ENCODE measurements at regions of chr1 and their contacts with region 1.

Region 1: DNA sequence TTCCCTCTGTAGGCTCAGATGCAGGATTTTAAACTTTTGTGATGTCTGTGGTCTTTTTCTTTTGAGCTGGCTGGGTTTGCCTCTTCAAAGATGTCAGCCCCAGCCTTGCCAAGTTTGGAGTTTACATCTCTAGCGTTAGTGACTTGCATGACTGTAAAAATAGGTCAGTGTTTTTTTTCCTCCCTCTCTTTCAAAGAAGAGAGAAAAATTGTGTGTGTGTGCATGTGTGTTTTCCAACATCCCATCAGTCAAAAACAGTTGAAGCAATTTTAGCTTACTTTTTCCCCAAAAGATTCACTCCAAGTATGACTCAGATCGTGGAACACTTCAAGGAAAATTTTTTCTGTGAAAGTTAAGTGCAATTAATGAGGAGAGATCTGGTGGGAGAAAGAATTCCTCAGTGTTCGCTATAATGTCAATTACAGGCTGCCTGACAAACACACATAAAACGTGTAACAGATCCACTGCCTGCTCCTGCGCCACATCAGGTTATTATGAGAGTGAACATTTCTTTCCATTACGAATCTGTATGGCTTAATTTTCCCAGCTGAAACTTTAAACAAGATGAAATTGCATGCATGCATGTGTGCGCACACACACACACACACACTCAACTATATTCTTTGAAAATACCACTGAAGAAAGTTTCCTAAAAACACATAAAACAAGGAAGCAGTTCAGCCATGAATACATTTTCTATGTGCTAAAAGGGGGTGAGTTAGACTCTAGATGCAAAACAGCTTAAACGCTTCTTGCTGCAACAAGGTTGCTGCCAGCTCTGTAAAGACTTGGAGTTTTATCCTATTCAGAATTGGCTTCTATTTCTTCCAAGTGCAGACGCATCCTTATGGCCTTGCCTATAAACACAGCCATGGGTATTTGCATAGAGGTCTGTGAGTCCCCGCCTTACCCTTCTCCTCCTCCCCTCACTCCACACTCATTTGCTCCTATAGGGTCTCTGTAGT is 55.5 kb downstream of the TLR5 start:
- DNase-seq: no peak
- ATAC-seq: no peak
- H3K4me3 ChIP-seq: no peak overlapping the region
- H3K27ac ChIP-seq: no peak overlapping the region
- H3K4me1 ChIP-seq: no peaks in the 10 kb centered on the region
- H3K27me3 ChIP-seq: 0 out of 2 replicates have a peak, but pooled peaks cover 8% of the 10 kb centered on the region
- CTCF ChIP-seq: no peak

Region 2: GRCh38 chr1:222732216-222733159 is 355.1 kb before region 1 on chr1:
- CTCF ChIA-PET with region 1: interaction called, 13 read pairs
- POLR2A ChIA-PET with region 1: no interaction called
- intact Hi-C with region 1: no loop called
- DNase-seq: no peak
- ATAC-seq: no peak
- H3K4me3 ChIP-seq: no peak overlapping the region
- H3K27ac ChIP-seq: no peak overlapping the region
- H3K4me1 ChIP-seq: peaks cover 15% of the 10 kb centered on the region
- H3K27me3 ChIP-seq: no peaks in the 10 kb centered on the region
- CTCF ChIP-seq: no peak

Region 3: DNA sequence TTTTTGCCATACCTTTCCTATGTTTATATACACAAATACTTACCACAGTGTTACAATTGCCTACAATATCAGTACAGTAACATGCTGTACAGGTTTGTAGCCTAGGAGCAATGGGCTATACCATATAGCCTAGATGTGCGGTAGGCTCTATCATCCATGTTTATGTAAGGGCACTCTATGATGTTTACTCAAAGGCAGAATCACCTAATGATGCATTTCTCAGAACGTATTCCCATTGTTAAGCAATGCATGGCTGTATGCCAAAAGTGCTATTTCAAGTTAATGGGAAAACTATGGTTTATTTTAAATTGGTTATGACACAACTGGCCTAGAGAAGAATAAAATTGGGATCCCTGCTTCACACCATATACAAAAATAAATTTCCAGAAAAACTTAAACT is 309.6 kb before region 1 on chr1:
- CTCF ChIA-PET with region 1: no interaction called
- POLR2A ChIA-PET with region 1: interaction called, 19 read pairs
- intact Hi-C with region 1: no loop called
- DNase-seq: peak; percentile 94
- ATAC-seq: peak; percentile 72
- H3K4me3 ChIP-seq: no peak overlapping the region
- H3K27ac ChIP-seq: peak overlapping the region; percentile 63
- H3K4me1 ChIP-seq: peaks cover 13% of the 10 kb centered on the region
- H3K27me3 ChIP-seq: no peaks in the 10 kb centered on the region
- CTCF ChIP-seq: no peak

Region 4: GRCh38 chr1:222798116-222798515 is 289.5 kb before region 1 on chr1:
- CTCF ChIA-PET with region 1: interaction called, 12 read pairs
- POLR2A ChIA-PET with region 1: no interaction called
- intact Hi-C with region 1: no loop called
- DNase-seq: peak; percentile 95
- ATAC-seq: peak; percentile 90
- H3K4me3 ChIP-seq: no peak overlapping the region
- H3K27ac ChIP-seq: no peak overlapping the region
- H3K4me1 ChIP-seq: peaks cover 9% of the 10 kb centered on the region
- H3K27me3 ChIP-seq: no peaks in the 10 kb centered on the region
- CTCF ChIP-seq: no peak

Region 5: GRCh38 chr1:223123011-223123610 is 35.5 kb after region 1 on chr1:
- CTCF ChIA-PET with region 1: interaction called, 18 read pairs
- POLR2A ChIA-PET with region 1: no interaction called
- intact Hi-C with region 1: no loop called
- DNase-seq: peak; percentile 18
- ATAC-seq: peak; percentile 14; the same call in 1 of the 2 replicates
- H3K4me3 ChIP-seq: peak overlapping the region; percentile 63
- H3K27ac ChIP-seq: no peak overlapping the region
- H3K4me1 ChIP-seq: peaks cover 13% of the 10 kb centered on the region
- H3K27me3 ChIP-seq: no peaks in the 10 kb centered on the region
- CTCF ChIP-seq: no peak

Region 6: GRCh38 chr1:223133824-223134435 is 46.4 kb after region 1 on chr1:
- CTCF ChIA-PET with region 1: interaction called, 10 read pairs
- POLR2A ChIA-PET with region 1: no interaction called
- intact Hi-C with region 1: no loop called
- DNase-seq: peak; percentile 94
- ATAC-seq: peak; percentile 92
- H3K4me3 ChIP-seq: peak overlapping the region; percentile 62
- H3K27ac ChIP-seq: peak overlapping the region; percentile 84
- H3K4me1 ChIP-seq: peaks cover 33% of the 10 kb centered on the region
- H3K27me3 ChIP-seq: no peaks in the 10 kb centered on the region
- CTCF ChIP-seq: peak; percentile 96

Measured in PC-3 (cell line).